Activated CD8-positive, alpha-beta T cell treated with anti-CD3 and anti-CD28 coated beads, Interleukin-2, amount 10 ng/mL, durations not matched to agents 7 days and 5 days (primary cell): ENCODE measurements at regions of chr7 and their contacts with region 1.

Region 1: GRCh38 chr7:38335492-38336147 is 62.2 kb upstream of the TARP start:
- DNase-seq: peak; percentile 90
- ATAC-seq: peak; percentile 89
- H3K4me3 Mint-ChIP-seq: peak overlapping the region; percentile 84
- H3K27ac Mint-ChIP-seq: peak overlapping the region; percentile 83
- H3K4me1 Mint-ChIP-seq: peaks cover 58% of the 10 kb centered on the region
- H3K27me3 Mint-ChIP-seq: no peaks in the 10 kb centered on the region

Region 2: GRCh38 chr7:38222481-38223096 is 113.0 kb before region 1 on chr7:
- CTCF ChIA-PET with region 1: interaction called, 318 read pairs
- POLR2A ChIA-PET with region 1: interaction called, 5 read pairs
- DNase-seq: peak; percentile 57
- ATAC-seq: peak; percentile 56
- H3K4me3 Mint-ChIP-seq: no peak overlapping the region
- H3K27ac Mint-ChIP-seq: no peak overlapping the region
- H3K4me1 Mint-ChIP-seq: peaks cover 76% of the 10 kb centered on the region
- H3K27me3 Mint-ChIP-seq: no peaks in the 10 kb centered on the region

Region 3: DNA sequence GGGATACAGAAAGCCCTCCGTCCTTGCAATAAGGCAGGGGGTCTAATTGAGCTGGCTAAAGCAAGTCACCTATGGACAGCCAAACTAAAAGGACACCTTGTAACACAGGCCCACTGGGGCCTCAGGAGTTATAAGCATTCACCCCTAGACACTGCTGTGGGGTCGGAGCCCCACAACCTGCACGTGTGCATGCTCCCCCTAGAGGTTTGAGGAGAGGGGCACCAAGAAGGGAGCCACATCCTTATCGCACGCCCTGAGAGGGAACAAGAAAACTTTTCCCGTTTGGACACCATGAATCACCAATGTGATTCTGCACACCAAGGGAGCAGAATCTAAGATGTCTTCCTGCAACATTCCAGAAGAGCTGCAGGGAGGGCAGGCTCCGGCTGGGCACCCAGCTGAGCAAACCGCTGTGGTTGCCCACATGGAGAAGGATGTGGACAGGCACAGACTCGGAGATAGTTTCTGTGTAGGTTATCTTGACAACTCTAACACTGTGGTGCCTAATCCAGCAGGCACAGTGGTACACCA is 44.4 kb before region 1 on chr7:
- CTCF ChIA-PET with region 1: no interaction called
- POLR2A ChIA-PET with region 1: no interaction called
- DNase-seq: no peak
- ATAC-seq: no peak
- H3K4me3 Mint-ChIP-seq: no peak overlapping the region
- H3K27ac Mint-ChIP-seq: no peak overlapping the region
- H3K4me1 Mint-ChIP-seq: peaks cover 2% of the 10 kb centered on the region
- H3K27me3 Mint-ChIP-seq: no peaks in the 10 kb centered on the region

Region 4: GRCh38 chr7:38306914-38307313 is 28.7 kb before region 1 on chr7:
- CTCF ChIA-PET with region 1: interaction called, 14 read pairs
- POLR2A ChIA-PET with region 1: no interaction called
- DNase-seq: peak; percentile 56
- ATAC-seq: peak; percentile 54
- H3K4me3 Mint-ChIP-seq: peak overlapping the region; percentile 60
- H3K27ac Mint-ChIP-seq: peak overlapping the region; percentile 92
- H3K4me1 Mint-ChIP-seq: peaks cover 59% of the 10 kb centered on the region
- H3K27me3 Mint-ChIP-seq: no peaks in the 10 kb centered on the region

Region 5: DNA sequence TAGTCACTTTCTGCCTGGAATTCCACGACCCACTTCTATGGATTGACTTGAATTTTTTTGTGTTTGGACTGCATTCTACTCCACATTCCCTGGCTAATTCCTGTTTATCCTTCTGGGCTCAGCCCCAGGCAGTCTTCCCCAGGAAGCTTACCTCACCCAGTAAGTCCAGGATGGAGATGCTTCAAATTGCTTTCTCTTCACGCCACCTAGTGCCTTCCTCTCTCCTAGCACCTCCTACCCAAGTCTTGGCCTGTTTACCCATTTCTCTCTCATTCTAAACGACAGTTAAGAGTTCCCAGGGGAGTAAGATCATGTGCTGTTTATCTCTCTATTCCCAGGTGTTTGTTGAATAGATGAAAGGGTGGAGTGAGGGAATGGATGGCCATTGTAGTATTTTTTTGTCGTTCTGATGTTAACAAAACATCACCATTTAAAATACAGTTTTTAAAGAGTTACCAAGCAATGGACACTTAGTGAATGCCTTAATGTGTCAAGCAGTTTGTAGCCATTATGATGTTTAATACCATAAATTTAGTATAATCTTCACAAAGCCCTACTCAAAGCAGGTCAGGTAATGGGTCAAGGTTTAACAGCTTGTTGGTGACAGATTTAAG is 16.7 kb before region 1 on chr7:
- CTCF ChIA-PET with region 1: interaction called, 87 read pairs
- POLR2A ChIA-PET with region 1: no interaction called
- DNase-seq: no peak
- ATAC-seq: peak; percentile 56
- H3K4me3 Mint-ChIP-seq: peak overlapping the region; percentile 71
- H3K27ac Mint-ChIP-seq: peak overlapping the region; percentile 76
- H3K4me1 Mint-ChIP-seq: peaks cover 55% of the 10 kb centered on the region
- H3K27me3 Mint-ChIP-seq: no peaks in the 10 kb centered on the region

Region 6: GRCh38 chr7:38360776-38361175 is 25.2 kb after region 1 on chr7:
- CTCF ChIA-PET with region 1: interaction called, 30 read pairs
- POLR2A ChIA-PET with region 1: no interaction called
- DNase-seq: no peak
- ATAC-seq: no peak
- H3K4me3 Mint-ChIP-seq: peak overlapping the region; percentile 91
- H3K27ac Mint-ChIP-seq: peak overlapping the region; percentile 28
- H3K4me1 Mint-ChIP-seq: peaks cover 63% of the 10 kb centered on the region
- H3K27me3 Mint-ChIP-seq: no peaks in the 10 kb centered on the region